KBM-7 (cell line): ENCODE measurements at regions of chr2 and their contacts with region 1.

Region 1: GRCh38 chr2:96024336-96025193 is 10.2 kb downstream of the GPAT2 start:
- DNase-seq: no peak

Region 2: DNA sequence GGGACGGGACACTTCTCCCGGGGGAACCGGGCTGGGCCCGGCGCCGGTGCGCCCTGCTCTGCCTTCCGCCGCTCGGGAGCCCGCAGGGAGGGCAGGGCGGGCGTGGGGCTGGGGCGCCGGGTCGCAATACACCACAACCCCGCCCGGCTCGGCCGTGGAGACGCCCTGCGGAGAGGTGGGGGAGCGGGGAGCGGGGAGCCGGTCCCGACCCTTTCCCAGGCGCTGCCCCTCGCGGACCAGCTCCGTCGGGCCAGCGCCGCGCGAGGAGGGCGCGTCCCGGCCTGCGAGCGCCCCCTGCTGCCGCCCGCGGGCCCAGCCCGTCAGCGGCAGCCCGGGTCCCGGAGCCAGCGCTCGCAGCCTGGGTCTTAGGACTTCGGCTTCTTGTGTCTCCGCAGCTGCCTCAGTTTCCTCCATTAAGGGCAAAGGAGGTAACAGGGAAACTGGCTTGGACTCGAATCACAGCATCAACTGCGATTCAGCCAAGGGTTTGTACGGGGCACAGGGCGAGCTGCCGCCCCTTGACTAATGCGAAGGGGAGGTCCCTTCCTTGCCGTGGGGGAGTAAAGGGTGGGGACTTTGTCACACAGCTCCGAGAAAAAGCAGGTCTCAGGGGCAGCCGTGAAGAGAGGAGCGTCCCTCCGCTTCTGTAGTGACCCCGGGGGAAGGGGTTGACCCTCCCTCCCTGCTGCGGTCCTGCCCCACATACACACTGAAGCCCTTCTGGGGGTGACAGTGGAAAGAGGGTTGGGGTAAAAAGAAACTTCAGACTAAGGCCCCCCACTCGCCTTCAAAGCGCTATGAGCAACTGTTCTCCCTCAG is 92.5 kb after region 1 on chr2:
- in situ Hi-C with region 1: loop called (anchors 25 kb)
- DNase-seq: peak; percentile 51